Activated CD4-positive, alpha-beta T cell treated with anti-CD3 and anti-CD28 coated beads, Interleukin-2, amount 10 ng/mL, durations not matched to agents 24 days and 14 days (primary cell): ENCODE measurements at regions of chr1 and their contacts with region 1.

Region 1: GRCh38 chr1:47417170-47418044 is 1.3 kb downstream of the FOXE3 start:
- DNase-seq: no peak
- H3K4me3 Mint-ChIP-seq: peak overlapping the region; percentile 63
- H3K27ac Mint-ChIP-seq: no peak overlapping the region
- H3K4me1 Mint-ChIP-seq: peaks cover 7% of the 10 kb centered on the region
- H3K27me3 Mint-ChIP-seq: peaks cover 68% of the 10 kb centered on the region

Region 2: GRCh38 chr1:47432071-47433036 is 14.9 kb after region 1 on chr1:
- intact Hi-C with region 1: loop called (anchors 2 kb)
- DNase-seq: peak; percentile 87
- H3K4me3 Mint-ChIP-seq: peak overlapping the region; percentile 25
- H3K27ac Mint-ChIP-seq: peak overlapping the region; percentile 25
- H3K4me1 Mint-ChIP-seq: peaks cover 34% of the 10 kb centered on the region
- H3K27me3 Mint-ChIP-seq: peaks cover 46% of the 10 kb centered on the region